ENCODE measurements at regions of chr2 and their contacts with region 1.

Region 1: GRCh38 chr2:129923265-129924091 is 56.0 kb upstream of the RAB6C start:
- DNase-seq: peak; percentile 58 to 88
- H3K4me3 ChIP-seq: peak overlapping the region; percentile 20 to 57 (median 52); a peak in 7 of 8 replicates
- H3K27ac ChIP-seq: no peak overlapping the region
- H3K4me1 ChIP-seq: peaks cover 0 to 10% (median 4%) of the 10 kb centered on the region in 4 experiments; a peak in 5 of 7 replicates
- H3K27me3 ChIP-seq: peaks cover 0 to 4% (median 3%) of the 10 kb centered on the region in 4 experiments; a peak in 3 of 7 replicates
- CTCF ChIP-seq: peak; percentile 65 to 78 (median 67)
- EP300 ChIP-seq: no peak
- POLR2A ChIP-seq: no peak
- RAD21 ChIP-seq: peak; percentile 78 to 80

Region 2: GRCh38 chr2:129587426-129588064 is 335.9 kb before region 1 on chr2:
- CTCF ChIA-PET with region 1: interaction called, 10 read pairs
- POLR2A ChIA-PET with region 1: no interaction called
- DNase-seq: peak; percentile 44 to 87
- H3K4me3 ChIP-seq: no peak overlapping the region
- H3K27ac ChIP-seq: no peak overlapping the region
- H3K4me1 ChIP-seq: no peaks in the 10 kb centered on the region; a peak in 1 of 7 replicates
- H3K27me3 ChIP-seq: peaks cover 0 to 16% (median 9%) of the 10 kb centered on the region in 4 experiments; a peak in 6 of 7 replicates
- CTCF ChIP-seq: peak; percentile 73 to 90 (median 78)
- EP300 ChIP-seq: no peak
- POLR2A ChIP-seq: no peak
- RAD21 ChIP-seq: peak; percentile 55 to 64

Region 3: GRCh38 chr2:129877289-129877779 is 46.1 kb before region 1 on chr2:
- CTCF ChIA-PET with region 1: interaction called, 15 read pairs
- POLR2A ChIA-PET with region 1: no interaction called
- DNase-seq: peak; percentile 46 to 83
- H3K4me3 ChIP-seq: peak overlapping the region; percentile 79 to 89 (median 86)
- H3K27ac ChIP-seq: no peak overlapping the region
- H3K4me1 ChIP-seq: no peaks in the 10 kb centered on the region; a peak in 2 of 7 replicates
- H3K27me3 ChIP-seq: no peaks in the 10 kb centered on the region
- CTCF ChIP-seq: no peak
- EP300 ChIP-seq: no peak
- POLR2A ChIP-seq: no peak
- RAD21 ChIP-seq: no peak

Region 4: GRCh38 chr2:129888896-129889295 is 34.6 kb before region 1 on chr2:
- CTCF ChIA-PET with region 1: interaction called, 10 read pairs
- POLR2A ChIA-PET with region 1: no interaction called
- DNase-seq: no peak
- H3K4me3 ChIP-seq: no peak overlapping the region
- H3K27ac ChIP-seq: no peak overlapping the region
- H3K4me1 ChIP-seq: peaks cover 0 to 11% (median 2%) of the 10 kb centered on the region in 4 experiments
- H3K27me3 ChIP-seq: no peaks in the 10 kb centered on the region
- CTCF ChIP-seq: no peak
- EP300 ChIP-seq: no peak
- POLR2A ChIP-seq: no peak
- RAD21 ChIP-seq: no peak

Region 5: GRCh38 chr2:129908721-129909373 is 14.6 kb before region 1 on chr2:
- CTCF ChIA-PET with region 1: interaction called, 30 read pairs
- POLR2A ChIA-PET with region 1: interaction called, 4 read pairs
- DNase-seq: peak in 1 of 2 experiments; percentile 47
- H3K4me3 ChIP-seq: no peak overlapping the region
- H3K27ac ChIP-seq: no peak overlapping the region
- H3K4me1 ChIP-seq: peaks cover 0 to 3% (median 2%) of the 10 kb centered on the region in 4 experiments; a peak in 2 of 7 replicates
- H3K27me3 ChIP-seq: no peaks in the 10 kb centered on the region
- CTCF ChIP-seq: no peak
- EP300 ChIP-seq: no peak
- POLR2A ChIP-seq: no peak
- RAD21 ChIP-seq: no peak

Measured in H1 (cell line).